CD8-positive, alpha-beta memory T cell (primary cell): ENCODE measurements at regions of chr3 and their contacts with region 1.

Region 1: DNA sequence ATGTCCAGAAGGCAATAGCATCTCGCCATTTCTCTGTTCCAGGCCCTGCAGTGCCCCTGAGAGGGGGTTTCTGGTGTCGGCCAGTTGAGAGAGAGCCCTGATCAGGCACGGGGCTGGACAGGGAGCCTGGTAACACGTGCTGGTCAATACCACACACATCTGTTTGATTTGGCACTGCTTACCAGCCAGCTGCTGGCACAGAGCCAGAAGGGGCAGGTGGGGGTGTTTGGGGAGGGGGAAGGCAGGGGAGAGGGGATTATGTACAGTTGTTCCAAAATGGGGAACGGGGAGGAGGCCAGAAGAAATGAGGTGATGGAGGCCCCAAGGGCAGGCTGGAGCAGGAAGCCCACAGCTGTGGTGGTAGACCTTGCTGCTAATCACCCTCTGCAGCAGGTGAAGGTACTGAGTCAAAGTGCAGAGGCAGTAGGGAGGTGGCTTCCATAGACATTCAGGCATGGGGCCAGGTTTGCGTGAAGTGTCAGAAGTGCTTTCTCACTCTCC is 153.5 kb upstream of the LPP start:
- DNase-seq: peak in 1 of 5 donors; percentile 52
- H3K4me3 ChIP-seq: no peak overlapping the region
- H3K4me3 Mint-ChIP-seq: peak overlapping the region in 6 of 7 donors; percentile 72 to 89 (median 79)
- H3K27ac ChIP-seq: peak overlapping the region; percentile 46
- H3K27ac Mint-ChIP-seq: peak overlapping the region; percentile 83 to 100 (median 95)
- H3K4me1 ChIP-seq: peaks cover 54% of the 10 kb centered on the region
- H3K4me1 Mint-ChIP-seq: peaks cover 66 to 79% (median 77%) of the 10 kb centered on the region in 3 donors
- H3K27me3 ChIP-seq: no peaks in the 10 kb centered on the region
- H3K27me3 Mint-ChIP-seq: no peaks in the 10 kb centered on the region

Region 2: GRCh38 chr3:188320757-188321156 is 320.3 kb after region 1 on chr3:
- CTCF ChIA-PET with region 1: no interaction called
- POLR2A ChIA-PET with region 1: interaction called, 10 read pairs
- DNase-seq: no peak
- H3K4me3 ChIP-seq: no peak overlapping the region
- H3K4me3 Mint-ChIP-seq: no peak overlapping the region
- H3K27ac ChIP-seq: no peak overlapping the region
- H3K27ac Mint-ChIP-seq: peak overlapping the region in 1 of 8 donors; percentile 31
- H3K4me1 ChIP-seq: peaks cover 25% of the 10 kb centered on the region
- H3K4me1 Mint-ChIP-seq: peaks cover 33 to 61% (median 45%) of the 10 kb centered on the region in 3 donors
- H3K27me3 ChIP-seq: no peaks in the 10 kb centered on the region
- H3K27me3 Mint-ChIP-seq: no peaks in the 10 kb centered on the region